A549 (cell line): ENCODE measurements at regions of chr5 and their contacts with region 1.

Region 1: GRCh38 chr5:172059661-172060100 is 53.2 kb upstream of the FBXW11 start:
- DNase-seq: peak in 1 of 2 experiments; percentile 29
- ATAC-seq: peak; percentile 56 to 74; a peak in 5 of 6 replicates
- H3K4me3 ChIP-seq: no peak overlapping the region
- H3K27ac ChIP-seq: no peak overlapping the region
- H3K4me1 ChIP-seq: no peaks in the 10 kb centered on the region
- CTCF ChIP-seq: peak; percentile 73
- EP300 ChIP-seq: no peak
- POLR2A ChIP-seq: no peak
- RAD21 ChIP-seq: peak; percentile 71 to 80

Region 2: DNA sequence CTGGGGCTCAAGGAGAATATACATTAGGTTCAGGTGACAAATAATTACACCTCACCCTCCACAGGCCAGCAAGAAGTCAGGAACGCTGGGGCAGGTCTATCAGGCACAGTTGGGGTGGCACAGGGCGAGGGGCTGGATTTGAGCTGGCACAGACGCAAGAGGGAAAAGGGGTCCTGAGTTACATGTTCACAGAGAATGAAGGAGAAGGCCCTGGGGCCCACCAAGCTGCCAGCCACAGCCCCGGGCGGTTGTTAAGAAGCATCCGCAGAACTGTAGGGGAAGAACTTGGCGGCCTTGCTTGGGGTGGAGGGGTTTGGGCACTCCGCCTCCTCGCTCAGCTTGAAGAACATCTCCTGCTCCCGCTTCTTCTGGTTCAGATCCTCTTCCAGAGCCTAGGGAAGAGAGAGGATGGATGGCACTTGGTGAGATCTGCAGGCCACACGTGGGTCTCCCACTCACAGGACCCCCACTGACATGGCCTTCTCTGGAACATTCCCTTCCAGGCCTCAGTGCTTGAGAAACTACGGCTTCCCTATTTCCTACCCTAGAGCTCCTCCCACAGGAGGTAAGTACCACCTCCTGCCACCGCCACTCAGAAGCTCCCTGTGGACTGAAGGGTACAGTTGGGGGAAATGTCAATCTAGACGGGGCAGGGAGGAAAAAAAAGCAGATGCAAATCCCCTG is 14.9 kb before region 1 on chr5:
- CTCF ChIA-PET with region 1: interaction called, 11 read pairs
- POLR2A ChIA-PET with region 1: no interaction called
- DNase-seq: no peak
- ATAC-seq: peak in 1 of 2 experiments; percentile 42; a peak in 3 of 6 replicates
- H3K4me3 ChIP-seq: no peak overlapping the region
- H3K27ac ChIP-seq: no peak overlapping the region
- H3K4me1 ChIP-seq: no peaks in the 10 kb centered on the region
- CTCF ChIP-seq: no peak
- EP300 ChIP-seq: no peak
- POLR2A ChIP-seq: no peak
- RAD21 ChIP-seq: 0 out of 5 replicates have a peak, but pooled peaks of 1 of the 2 experiments have one; percentile 15

Region 3: GRCh38 chr5:172071289-172071875 is 11.7 kb after region 1 on chr5:
- CTCF ChIA-PET with region 1: interaction called, 12 read pairs
- POLR2A ChIA-PET with region 1: no interaction called
- DNase-seq: no peak
- ATAC-seq: no peak
- H3K4me3 ChIP-seq: no peak overlapping the region
- H3K27ac ChIP-seq: no peak overlapping the region
- H3K4me1 ChIP-seq: no peaks in the 10 kb centered on the region
- CTCF ChIP-seq: no peak
- EP300 ChIP-seq: no peak
- POLR2A ChIP-seq: no peak
- RAD21 ChIP-seq: no peak